Activated CD4-positive, alpha-beta memory T cell treated with anti-CD3 and anti-CD28 coated beads for 36 hours (primary cell): ENCODE measurements at regions of chr15 and their contacts with region 1.

Region 1: GRCh38 chr15:31344823-31345605 is 18.4 kb downstream of the KLF13 start:
- DNase-seq: peak; percentile 63
- H3K4me3 Mint-ChIP-seq: peak overlapping the region; percentile 93
- H3K27ac Mint-ChIP-seq: peak overlapping the region; percentile 100
- H3K4me1 Mint-ChIP-seq: peaks cover 98% of the 10 kb centered on the region
- H3K27me3 Mint-ChIP-seq: no peaks in the 10 kb centered on the region

Region 2: GRCh38 chr15:31215490-31216214 is 129.4 kb before region 1 on chr15:
- CTCF ChIA-PET with region 1: interaction called, 4 read pairs
- POLR2A ChIA-PET with region 1: interaction called, 3 read pairs
- intact Hi-C with region 1: loop called (anchors 5 kb)
- DNase-seq: peak; percentile 88
- H3K4me3 Mint-ChIP-seq: peak overlapping the region; percentile 68
- H3K27ac Mint-ChIP-seq: peak overlapping the region; percentile 56
- H3K4me1 Mint-ChIP-seq: peaks cover 15% of the 10 kb centered on the region
- H3K27me3 Mint-ChIP-seq: no peaks in the 10 kb centered on the region

Region 3: GRCh38 chr15:31265871-31266711 is 78.9 kb before region 1 on chr15:
- CTCF ChIA-PET with region 1: no interaction called
- POLR2A ChIA-PET with region 1: no interaction called
- intact Hi-C with region 1: loop called (anchors 5 kb)
- DNase-seq: peak; percentile 82
- H3K4me3 Mint-ChIP-seq: peak overlapping the region; percentile 9
- H3K27ac Mint-ChIP-seq: peak overlapping the region; percentile 59
- H3K4me1 Mint-ChIP-seq: peaks cover 68% of the 10 kb centered on the region
- H3K27me3 Mint-ChIP-seq: no peaks in the 10 kb centered on the region

Region 4: DNA sequence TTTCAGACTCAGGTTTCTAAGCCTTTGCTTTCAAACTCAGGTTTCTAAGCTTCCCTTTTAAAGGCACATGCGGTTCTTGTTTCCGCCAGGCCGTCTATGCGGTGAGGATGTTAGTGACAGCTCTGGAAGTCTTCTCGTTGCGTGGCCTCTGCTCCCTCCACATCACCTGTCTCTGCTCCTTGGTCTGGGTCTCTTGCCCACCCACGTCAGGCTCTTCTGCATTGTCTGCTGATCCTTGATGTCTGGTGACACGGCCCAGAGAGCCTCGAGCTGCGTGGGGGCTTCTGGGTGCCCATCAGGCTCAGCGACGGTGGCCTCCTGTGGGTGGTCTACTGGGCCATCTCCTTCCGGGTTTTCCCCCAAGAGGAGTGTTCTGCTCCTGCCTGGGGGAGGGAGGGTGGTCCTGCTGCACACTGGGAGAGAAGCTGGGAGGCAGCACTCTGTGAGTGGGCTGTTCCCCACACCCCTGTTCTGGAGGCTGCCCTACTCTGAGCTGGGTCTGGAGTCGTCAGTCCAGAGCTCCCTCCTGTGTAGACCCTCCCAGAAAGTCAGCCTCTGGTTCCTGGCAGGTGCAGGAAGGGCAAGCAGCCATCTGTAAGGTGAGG is 12.2 kb after region 1 on chr15:
- CTCF ChIA-PET with region 1: interaction called, 20 read pairs
- POLR2A ChIA-PET with region 1: interaction called, 97 read pairs
- intact Hi-C with region 1: loop called (anchors 1 kb)
- DNase-seq: peak; percentile 60
- H3K4me3 Mint-ChIP-seq: peak overlapping the region; percentile 65
- H3K27ac Mint-ChIP-seq: peak overlapping the region; percentile 97
- H3K4me1 Mint-ChIP-seq: peaks cover 99% of the 10 kb centered on the region
- H3K27me3 Mint-ChIP-seq: no peaks in the 10 kb centered on the region

Region 5: GRCh38 chr15:31391687-31392671 is 47.0 kb after region 1 on chr15:
- CTCF ChIA-PET with region 1: interaction called, 5 read pairs
- POLR2A ChIA-PET with region 1: interaction called, 5 read pairs
- intact Hi-C with region 1: loop called (anchors 5 kb)
- DNase-seq: peak; percentile 90
- H3K4me3 Mint-ChIP-seq: peak overlapping the region; percentile 87
- H3K27ac Mint-ChIP-seq: peak overlapping the region; percentile 87
- H3K4me1 Mint-ChIP-seq: peaks cover 34% of the 10 kb centered on the region
- H3K27me3 Mint-ChIP-seq: no peaks in the 10 kb centered on the region

Region 6: DNA sequence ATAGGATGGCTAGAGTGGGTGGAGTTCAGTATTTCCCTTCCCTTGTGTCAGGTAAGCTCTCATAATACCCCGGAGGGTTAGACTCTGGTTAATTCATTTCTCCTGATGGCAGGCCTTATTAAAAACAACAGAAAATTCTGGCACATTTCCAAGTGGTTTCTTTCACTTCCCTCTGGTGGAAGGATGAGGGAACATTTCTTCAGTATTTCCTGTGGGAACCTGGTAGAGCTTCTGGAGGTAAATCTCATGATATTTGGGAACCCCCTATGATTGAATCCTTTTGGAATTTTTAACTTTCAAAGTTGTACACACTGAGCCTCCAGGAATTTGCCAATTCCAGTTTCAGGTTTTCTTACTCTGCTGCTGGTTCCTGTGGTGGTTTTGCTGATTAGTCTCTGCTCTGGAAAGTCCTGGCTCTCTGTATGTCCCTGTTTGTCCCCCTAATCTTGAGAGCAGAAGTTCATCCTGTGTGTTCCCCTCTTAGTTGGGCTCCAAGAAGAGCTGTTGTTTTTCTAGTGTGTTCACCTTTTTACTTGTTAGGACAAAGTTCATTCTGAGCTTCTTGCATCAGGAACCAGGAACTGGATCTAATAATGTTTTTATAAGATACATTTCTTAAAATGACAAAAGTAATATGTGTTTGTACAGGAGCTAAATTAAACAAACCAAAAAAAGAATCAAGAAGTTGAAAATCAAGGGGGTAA is 697.4 kb after region 1 on chr15:
- CTCF ChIA-PET with region 1: no interaction called
- POLR2A ChIA-PET with region 1: no interaction called
- intact Hi-C with region 1: no loop called
- DNase-seq: no peak
- H3K4me3 Mint-ChIP-seq: no peak overlapping the region
- H3K27ac Mint-ChIP-seq: no peak overlapping the region
- H3K4me1 Mint-ChIP-seq: no peaks in the 10 kb centered on the region
- H3K27me3 Mint-ChIP-seq: peaks cover 13% of the 10 kb centered on the region